Mammary epithelial cell (primary cell): ENCODE measurements at regions of chr4 and their contacts with region 1.

Region 1: DNA sequence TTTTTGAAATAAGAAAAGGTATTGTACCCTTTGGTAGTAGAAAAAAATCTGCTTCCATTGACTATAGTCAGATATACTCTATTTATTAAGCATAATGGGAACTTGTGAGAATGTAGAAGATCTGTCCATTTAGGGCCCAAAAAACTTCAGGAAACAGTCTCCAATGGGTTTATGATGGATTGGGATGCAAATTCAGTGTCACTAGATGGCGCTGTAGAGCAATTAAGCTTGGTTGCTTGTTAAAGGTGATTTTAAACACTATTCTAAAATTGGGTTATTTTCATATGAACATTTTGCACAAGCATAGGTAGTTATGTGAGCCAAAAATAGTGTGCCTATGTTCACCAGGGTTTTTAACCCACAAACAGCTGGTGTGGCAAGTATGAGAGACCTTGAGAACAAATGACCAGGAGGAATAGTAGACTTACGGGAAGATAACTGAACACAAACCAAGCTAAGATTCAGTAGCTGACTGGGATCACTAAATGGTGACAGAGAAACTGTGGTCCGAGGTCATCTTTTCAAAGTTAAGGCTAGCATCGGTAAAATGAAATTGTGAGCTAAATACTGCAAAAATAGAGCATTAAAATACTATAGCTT is 80.3 kb upstream of the LSM6 start:
- DNase-seq: peak; percentile 35
- H3K4me3 ChIP-seq: no peak overlapping the region
- H3K27ac ChIP-seq: no peak overlapping the region
- H3K4me1 ChIP-seq: no peaks in the 10 kb centered on the region
- H3K27me3 ChIP-seq: no peaks in the 10 kb centered on the region
- CTCF ChIP-seq: peak; percentile 86 to 87

Region 2: GRCh38 chr4:145956288-145956890 is 138.8 kb before region 1 on chr4:
- CTCF ChIA-PET with region 1: no interaction called
- dilution Hi-C with region 1: no loop called
- in situ Hi-C with region 1: no loop called
- intact Hi-C with region 1: loop called (anchors 1 kb)
- DNase-seq: peak; percentile 25
- H3K4me3 ChIP-seq: no peak overlapping the region
- H3K27ac ChIP-seq: no peak overlapping the region
- H3K4me1 ChIP-seq: peaks cover 27% of the 10 kb centered on the region
- H3K27me3 ChIP-seq: no peaks in the 10 kb centered on the region
- CTCF ChIP-seq: peak; percentile 71 to 76

Region 3: GRCh38 chr4:146175541-146176453 is 80.6 kb after region 1 on chr4 and contains the start of gene LSM6:
- CTCF ChIA-PET with region 1: no interaction called
- dilution Hi-C with region 1: no loop called
- in situ Hi-C with region 1: no loop called
- intact Hi-C with region 1: loop called (anchors 1 kb)
- DNase-seq: peak; percentile 83
- H3K4me3 ChIP-seq: peak within 1 kb of the TSS; percentile 75 to 89 (median 79)
- H3K27ac ChIP-seq: peak within 1 kb of the TSS; percentile 81
- H3K4me1 ChIP-seq: no peaks in the 10 kb centered on the region
- H3K27me3 ChIP-seq: no peaks in the 10 kb centered on the region
- CTCF ChIP-seq: no peak
- total RNA-seq, gene LSM6: 10.5 to 32.1 TPM

Region 4: DNA sequence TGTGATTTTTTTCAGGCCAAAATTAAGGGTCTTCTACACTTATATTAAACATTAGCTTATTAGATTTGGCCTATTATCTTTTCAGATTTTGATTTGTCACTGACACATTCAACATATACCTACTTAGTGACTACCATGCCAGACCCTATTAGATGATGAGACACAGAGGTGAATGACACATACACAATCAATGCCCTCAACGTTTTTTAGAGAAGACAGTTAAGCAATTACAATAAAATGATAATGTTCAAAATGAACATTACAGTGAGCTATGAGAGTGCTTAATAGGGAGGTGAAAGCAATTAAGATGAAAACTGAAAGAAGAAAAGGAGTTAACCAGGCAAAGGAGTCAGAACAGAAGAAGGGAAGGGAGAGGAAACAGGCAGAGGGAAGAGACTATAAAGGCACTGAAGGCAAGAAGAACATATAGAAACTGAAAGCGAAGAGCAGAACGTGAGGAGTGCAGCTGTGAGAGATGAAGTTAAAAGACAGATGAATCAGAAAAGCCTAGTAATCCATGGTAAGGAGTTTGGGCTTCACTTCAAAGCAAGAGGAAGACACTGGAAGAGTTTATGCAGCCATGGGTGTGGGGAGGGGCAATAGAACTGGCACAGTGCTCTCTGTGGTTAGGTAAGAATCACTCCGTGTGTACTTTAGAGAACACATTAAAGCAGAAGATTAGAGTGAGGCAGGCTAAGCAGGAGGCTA is 238.2 kb after region 1 on chr4:
- CTCF ChIA-PET with region 1: no interaction called
- dilution Hi-C with region 1: no loop called
- in situ Hi-C with region 1: no loop called
- intact Hi-C with region 1: loop called (anchors 10 kb)
- DNase-seq: peak; percentile 62
- H3K4me3 ChIP-seq: no peak overlapping the region
- H3K27ac ChIP-seq: no peak overlapping the region
- H3K4me1 ChIP-seq: peaks cover 52% of the 10 kb centered on the region
- H3K27me3 ChIP-seq: no peaks in the 10 kb centered on the region
- CTCF ChIP-seq: no peak